Thyroid gland (tissue), 4 donors: ENCODE measurements at regions of chr10 and their contacts with region 1.

Region 1: GRCh38 chr10:69914398-69915214 is 112.9 kb downstream of the COL13A1 start:
- DNase-seq: peak; percentile 81 to 86
- H3K4me3 ChIP-seq: no peak overlapping the region
- H3K27ac ChIP-seq: no peak overlapping the region
- H3K4me1 ChIP-seq: peaks cover 20 to 34% of the 10 kb centered on the region in 2 donors
- H3K27me3 ChIP-seq: no peaks in the 10 kb centered on the region
- CTCF ChIP-seq: peak; percentile 84 to 97 (median 93)
- POLR2A ChIP-seq: no peak

Region 2: DNA sequence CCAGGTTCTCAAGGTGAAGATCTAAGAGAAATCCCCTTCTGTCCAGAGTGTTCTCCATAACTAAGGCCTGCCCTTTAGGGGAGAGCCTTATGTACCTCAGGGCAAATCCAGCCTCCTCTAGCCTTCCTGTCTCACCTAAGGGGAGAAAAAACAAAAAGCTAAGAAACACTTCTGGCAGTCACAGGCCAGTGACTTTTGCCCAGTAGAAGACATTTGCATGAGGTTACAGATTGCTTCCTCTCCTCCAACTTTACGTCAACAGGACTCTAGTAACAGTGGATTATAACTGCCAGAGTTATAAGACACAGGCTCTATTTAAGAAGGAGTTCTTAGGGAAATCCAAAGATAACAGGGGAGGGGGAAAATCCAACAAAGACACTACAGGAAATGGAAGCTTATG is 300.5 kb before region 1 on chr10:
- intact Hi-C with region 1: no loop called
- DNase-seq: no peak
- H3K4me3 ChIP-seq: no peak overlapping the region
- H3K27ac ChIP-seq: no peak overlapping the region
- H3K4me1 ChIP-seq: no peaks in the 10 kb centered on the region
- H3K27me3 ChIP-seq: no peaks in the 10 kb centered on the region
- CTCF ChIP-seq: no peak
- POLR2A ChIP-seq: no peak

Region 3: GRCh38 chr10:69721690-69722310 is 192.8 kb before region 1 on chr10:
- intact Hi-C with region 1: no loop called
- DNase-seq: peak; percentile 17 to 67
- H3K4me3 ChIP-seq: no peak overlapping the region
- H3K27ac ChIP-seq: no peak overlapping the region
- H3K4me1 ChIP-seq: no peaks in the 10 kb centered on the region
- H3K27me3 ChIP-seq: no peaks in the 10 kb centered on the region
- CTCF ChIP-seq: no peak
- POLR2A ChIP-seq: no peak

Region 4: GRCh38 chr10:69786791-69787190 is 127.8 kb before region 1 on chr10:
- intact Hi-C with region 1: no loop called
- DNase-seq: no peak
- H3K4me3 ChIP-seq: no peak overlapping the region
- H3K27ac ChIP-seq: no peak overlapping the region
- H3K4me1 ChIP-seq: no peaks in the 10 kb centered on the region
- H3K27me3 ChIP-seq: no peaks in the 10 kb centered on the region
- CTCF ChIP-seq: peak in 1 of 6 experiments; percentile 4
- POLR2A ChIP-seq: no peak

Region 5: GRCh38 chr10:69883310-69884023 is 31.1 kb before region 1 on chr10:
- intact Hi-C with region 1: loop called (anchors 5 kb)
- DNase-seq: peak; percentile 66 to 67
- H3K4me3 ChIP-seq: no peak overlapping the region
- H3K27ac ChIP-seq: no peak overlapping the region
- H3K4me1 ChIP-seq: peaks cover 0 to 12% of the 10 kb centered on the region in 2 donors
- H3K27me3 ChIP-seq: no peaks in the 10 kb centered on the region
- CTCF ChIP-seq: peak; percentile 21 to 95 (median 70)
- POLR2A ChIP-seq: no peak

Region 6: GRCh38 chr10:69957886-69958555 is 43.4 kb after region 1 on chr10:
- intact Hi-C with region 1: loop called (anchors 5 kb)
- DNase-seq: no peak
- H3K4me3 ChIP-seq: no peak overlapping the region
- H3K27ac ChIP-seq: no peak overlapping the region
- H3K4me1 ChIP-seq: peaks cover 0 to 20% of the 10 kb centered on the region in 2 donors
- H3K27me3 ChIP-seq: no peaks in the 10 kb centered on the region
- CTCF ChIP-seq: peak; percentile 35 to 84 (median 71)
- POLR2A ChIP-seq: no peak

Region 7: GRCh38 chr10:71099731-71100361 is 1185.2 kb after region 1 on chr10:
- intact Hi-C with region 1: no loop called
- DNase-seq: no peak
- H3K4me3 ChIP-seq: no peak overlapping the region
- H3K27ac ChIP-seq: no peak overlapping the region
- H3K4me1 ChIP-seq: no peaks in the 10 kb centered on the region
- H3K27me3 ChIP-seq: no peaks in the 10 kb centered on the region
- CTCF ChIP-seq: no peak
- POLR2A ChIP-seq: no peak